ENCODE measurements at regions of chr12 and their contacts with region 1.

Region 1: GRCh38 chr12:113241191-113242025 is 20.1 kb downstream of the TPCN1 start:
- DNase-seq: peak; percentile 72 to 80
- ATAC-seq: peak; percentile 23 to 34
- H3K4me3 ChIP-seq: no peak overlapping the region
- H3K27ac ChIP-seq: peak overlapping the region; percentile 92 to 99 (median 96)
- H3K4me1 ChIP-seq: peaks cover 96% of the 10 kb centered on the region in 2 donors
- H3K27me3 ChIP-seq: no peaks in the 10 kb centered on the region
- CTCF ChIP-seq: no peak
- POLR2A ChIP-seq: peak in 1 of 2 donors; percentile 39

Region 2: DNA sequence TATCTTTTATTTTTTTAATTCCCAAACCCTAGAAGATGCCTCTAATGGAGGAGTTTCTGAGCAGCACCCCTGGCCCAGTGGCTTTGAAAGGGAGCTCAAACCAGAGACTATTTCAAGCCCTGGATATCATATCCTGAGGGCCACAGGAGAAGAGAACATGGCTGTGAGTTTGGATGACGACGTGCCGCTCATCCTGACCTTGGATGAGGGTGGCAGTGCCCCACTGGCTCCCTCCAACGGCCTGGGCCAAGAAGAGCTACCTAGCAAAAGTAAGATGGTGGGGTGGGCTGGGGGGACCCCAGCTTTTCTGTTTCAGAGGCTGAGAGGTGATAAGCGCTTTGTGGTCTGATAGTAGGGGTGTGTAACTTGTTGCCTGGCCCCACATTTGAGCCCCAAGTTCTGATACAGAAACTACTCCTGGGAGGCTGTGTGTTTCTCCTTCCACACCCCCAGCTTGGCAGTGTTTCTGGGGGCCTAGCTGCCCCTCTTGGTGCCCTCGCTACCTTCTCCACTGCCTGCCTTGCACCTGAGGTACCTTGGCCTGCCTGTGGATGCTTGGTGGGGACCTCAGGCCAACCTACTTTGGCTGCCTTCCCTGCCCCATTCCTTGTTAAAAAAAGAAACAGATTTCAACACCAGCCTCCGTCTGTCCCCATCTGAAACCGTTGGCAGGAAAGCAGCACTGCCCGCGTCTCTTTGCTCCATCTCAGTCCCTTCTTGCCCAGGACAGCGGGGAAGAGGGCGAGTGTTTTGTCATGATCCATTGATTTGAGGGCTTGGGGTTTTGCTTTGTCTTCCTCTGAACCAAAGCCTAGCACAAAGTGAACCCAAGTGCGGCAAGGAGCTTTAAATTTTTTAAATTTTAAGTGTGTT is 14.5 kb before region 1 on chr12:
- in situ Hi-C with region 1: no loop called
- intact Hi-C with region 1: loop called (anchors 2 kb)
- DNase-seq: peak; percentile 84 to 91
- ATAC-seq: peak; percentile 59 to 64
- H3K4me3 ChIP-seq: peak overlapping the region in 1 of 4 donors; percentile 3
- H3K27ac ChIP-seq: peak overlapping the region; percentile 92 to 99 (median 96)
- H3K4me1 ChIP-seq: peaks cover 86 to 91% of the 10 kb centered on the region in 2 donors
- H3K27me3 ChIP-seq: no peaks in the 10 kb centered on the region
- CTCF ChIP-seq: no peak
- POLR2A ChIP-seq: peak; percentile 62 to 69

Region 3: GRCh38 chr12:115227137-115227615 is 1985.8 kb after region 1 on chr12:
- in situ Hi-C with region 1: no loop called
- intact Hi-C with region 1: no loop called
- DNase-seq: peak; percentile 87 to 97
- ATAC-seq: peak; percentile 94 to 96
- H3K4me3 ChIP-seq: no peak overlapping the region
- H3K27ac ChIP-seq: peak overlapping the region; percentile 83 to 92 (median 84)
- H3K4me1 ChIP-seq: peaks cover 14 to 36% of the 10 kb centered on the region in 2 donors
- H3K27me3 ChIP-seq: no peaks in the 10 kb centered on the region
- CTCF ChIP-seq: no peak
- POLR2A ChIP-seq: no peak